GM13976 (cell line): ENCODE measurements at regions of chr20 and their contacts with region 1.

Region 1: GRCh38 chr20:21505161-21505809 is 8.6 kb downstream of the NKX2-2 start:
- DNase-seq: peak; percentile 86
- CTCF ChIP-seq: peak; percentile 97

Region 2: DNA sequence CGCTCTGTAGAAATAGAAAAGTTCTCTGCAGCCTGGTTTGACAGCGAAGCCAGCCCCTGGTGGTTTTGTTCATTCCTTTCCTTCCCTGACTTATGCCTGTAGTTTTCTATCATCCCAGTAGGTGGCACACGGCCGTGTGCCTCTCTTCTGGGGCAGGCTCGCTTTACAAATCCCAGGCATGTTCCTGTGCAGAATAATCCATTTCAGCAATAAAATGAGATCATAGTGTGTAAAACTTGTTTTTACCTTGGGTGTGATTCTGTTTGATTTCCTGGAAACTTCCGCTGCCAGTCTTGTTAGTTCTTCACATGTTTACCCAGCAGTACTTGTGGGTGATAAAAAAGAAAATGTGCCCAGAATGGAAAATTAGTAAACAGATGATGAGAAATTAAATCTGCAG is 1144.8 kb before region 1 on chr20:
- in situ Hi-C with region 1: loop called (anchors 25 kb)
- DNase-seq: peak; percentile 64
- CTCF ChIP-seq: peak; percentile 60

Region 3: GRCh38 chr20:20860078-20860806 is 645.0 kb before region 1 on chr20:
- in situ Hi-C with region 1: loop called (anchors 10 kb)
- DNase-seq: peak; percentile 76
- CTCF ChIP-seq: peak; percentile 89

Region 4: DNA sequence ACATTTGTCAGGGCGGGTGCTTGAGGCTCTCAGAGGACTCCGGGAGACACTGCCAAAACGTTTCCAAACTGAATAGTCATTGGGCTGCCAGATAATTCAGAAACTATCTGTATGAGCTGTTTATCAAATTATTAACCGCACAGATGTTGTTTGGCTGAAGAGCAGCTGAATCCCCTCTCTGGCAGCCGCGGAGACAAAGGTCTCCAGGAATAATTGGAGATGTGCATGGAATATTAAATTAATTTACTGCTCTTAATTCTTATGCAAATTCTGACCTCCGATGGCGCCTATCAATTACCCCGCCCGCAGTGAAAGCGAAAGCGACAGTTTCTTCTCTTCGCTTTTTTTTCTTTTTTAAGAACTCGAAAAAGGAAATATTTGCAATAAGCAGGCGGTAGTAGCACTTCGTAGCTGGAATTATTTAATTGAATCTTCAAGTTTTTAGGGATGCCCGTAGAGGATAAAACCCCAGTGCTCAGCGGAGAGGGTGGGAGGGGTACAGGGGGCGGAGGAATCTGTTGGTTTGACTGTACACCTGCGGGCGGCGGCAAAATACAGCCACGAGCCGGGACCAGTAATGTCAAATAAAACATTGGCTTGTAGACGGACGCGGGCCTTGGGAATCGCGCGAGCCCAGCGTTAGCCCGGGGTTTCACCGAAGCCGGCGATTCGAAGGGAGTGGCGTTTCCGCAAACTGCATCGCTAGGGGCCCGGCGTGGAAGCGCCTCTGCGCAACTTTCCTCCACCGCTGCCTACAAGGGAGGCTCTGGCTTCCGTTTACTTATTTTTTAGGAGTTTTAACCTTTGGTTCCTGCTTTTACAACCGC is 405.3 kb before region 1 on chr20:
- in situ Hi-C with region 1: loop called (anchors 25 kb)
- DNase-seq: peak; percentile 61
- CTCF ChIP-seq: no peak

Region 5: DNA sequence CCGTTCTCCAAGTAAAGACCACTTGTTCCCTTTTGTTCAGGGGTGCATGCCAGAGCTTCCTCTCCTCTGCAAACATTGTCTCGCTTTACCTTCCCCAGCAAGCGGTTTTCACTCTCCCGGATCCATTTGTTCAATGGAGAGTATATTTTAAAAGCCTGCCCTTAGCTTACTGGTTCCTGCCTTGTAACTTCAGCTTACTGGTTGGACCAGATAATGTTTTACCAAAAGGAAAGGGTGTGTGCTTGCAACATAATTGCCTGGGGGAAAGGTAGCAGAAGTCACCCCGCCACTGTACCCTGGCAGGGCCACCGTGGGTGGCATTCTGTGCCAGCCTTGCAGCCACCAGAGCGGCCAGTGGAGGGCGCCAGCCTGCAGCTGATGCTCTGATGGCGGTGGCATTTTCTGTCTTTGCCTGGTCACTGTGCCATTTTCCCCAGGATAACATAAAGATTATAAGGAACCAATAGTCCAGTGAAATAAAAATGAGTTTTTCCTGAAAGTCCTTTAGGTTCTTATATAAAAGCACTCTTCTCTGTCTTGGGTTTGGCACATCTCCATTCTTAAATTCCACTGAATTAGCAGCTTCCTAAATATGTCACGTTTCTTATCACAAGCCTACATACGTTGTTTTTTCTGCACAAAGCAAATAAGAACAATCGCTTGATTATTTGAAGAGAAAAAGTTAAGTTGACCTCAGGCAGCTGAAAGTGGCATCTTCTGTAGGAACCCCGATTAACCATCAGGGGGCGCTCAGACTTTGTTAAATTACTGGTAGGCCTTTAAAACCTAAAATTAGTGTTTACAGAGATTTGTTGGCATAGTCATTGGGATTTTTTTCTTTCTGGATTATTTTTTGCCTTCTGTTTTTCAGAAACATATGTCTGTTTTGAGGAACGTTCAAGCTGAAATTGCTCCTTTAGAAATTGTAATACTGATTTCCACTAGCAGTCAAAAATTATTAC is 269.5 kb before region 1 on chr20:
- in situ Hi-C with region 1: loop called (anchors 5 kb)
- DNase-seq: peak; percentile 72
- CTCF ChIP-seq: peak; percentile 94

Region 6: GRCh38 chr20:21719592-21720214 is 214.4 kb after region 1 on chr20:
- in situ Hi-C with region 1: no loop called
- DNase-seq: peak; percentile 57
- CTCF ChIP-seq: peak; percentile 67